ENCODE measurements at regions of chr17 and their contacts with region 1.

Region 1: GRCh38 chr17:16297367-16298139 is 55.7 kb downstream of the CENPV start:
- DNase-seq: no peak
- ATAC-seq: peak; percentile 44
- H3K4me3 ChIP-seq: no peak overlapping the region
- H3K27ac ChIP-seq: peak overlapping the region; percentile 34; the same call in 1 of the 2 replicates
- H3K4me1 ChIP-seq: peaks cover 14% of the 10 kb centered on the region
- H3K27me3 ChIP-seq: no peaks in the 10 kb centered on the region
- CTCF ChIP-seq: no peak

Region 2: DNA sequence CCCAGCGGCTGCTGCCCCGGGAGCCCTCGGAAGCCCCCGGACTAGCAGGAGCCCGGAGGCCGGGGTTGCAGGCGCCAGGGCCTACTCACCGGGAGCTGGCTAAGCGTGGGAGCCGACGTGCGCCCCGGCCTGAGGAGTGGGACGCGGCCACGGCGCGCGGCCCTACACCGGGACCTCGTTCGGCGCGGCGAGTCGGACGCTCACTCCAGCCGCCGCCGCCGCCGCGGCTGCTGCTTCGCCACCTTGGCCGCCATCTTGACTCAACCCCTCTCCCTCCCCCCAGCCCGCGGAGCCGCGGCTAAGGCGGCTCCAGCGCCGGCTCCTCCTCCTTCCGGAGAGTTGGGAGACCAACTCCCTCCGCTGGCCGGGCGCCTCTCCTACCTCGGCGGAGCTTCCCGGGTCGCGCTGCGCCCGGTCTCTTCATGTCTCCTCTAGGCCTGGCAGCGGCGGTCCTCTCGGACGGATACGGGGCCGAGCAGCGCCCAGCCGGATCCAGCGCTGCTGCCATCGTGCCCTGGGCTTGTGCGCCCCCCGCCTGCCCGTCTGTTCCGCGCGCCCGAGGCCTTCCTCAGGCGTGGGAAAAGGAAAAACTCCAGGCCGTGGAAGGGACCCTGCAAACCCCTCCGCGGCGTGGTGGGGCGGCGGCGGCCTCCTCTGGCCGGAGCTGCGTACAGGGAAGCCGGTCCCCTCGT is 82.1 kb before region 1 on chr17 and contains the start of gene NCOR1:
- CTCF ChIA-PET with region 1: no interaction called
- POLR2A ChIA-PET with region 1: no interaction called
- in situ Hi-C with region 1: no loop called
- intact Hi-C with region 1: loop called (anchors 10 kb)
- DNase-seq: peak; percentile 50
- ATAC-seq: peak; percentile 91
- H3K4me3 ChIP-seq: peak within 1 kb of the TSS; percentile 74 to 76
- H3K27ac ChIP-seq: peak within 1 kb of the TSS; percentile 83
- H3K4me1 ChIP-seq: peaks cover 12% of the 10 kb centered on the region; the same call in 1 of the 2 replicates
- H3K27me3 ChIP-seq: no peaks in the 10 kb centered on the region
- CTCF ChIP-seq: no peak
- total RNA-seq, gene NCOR1: 83.8 TPM

Region 3: DNA sequence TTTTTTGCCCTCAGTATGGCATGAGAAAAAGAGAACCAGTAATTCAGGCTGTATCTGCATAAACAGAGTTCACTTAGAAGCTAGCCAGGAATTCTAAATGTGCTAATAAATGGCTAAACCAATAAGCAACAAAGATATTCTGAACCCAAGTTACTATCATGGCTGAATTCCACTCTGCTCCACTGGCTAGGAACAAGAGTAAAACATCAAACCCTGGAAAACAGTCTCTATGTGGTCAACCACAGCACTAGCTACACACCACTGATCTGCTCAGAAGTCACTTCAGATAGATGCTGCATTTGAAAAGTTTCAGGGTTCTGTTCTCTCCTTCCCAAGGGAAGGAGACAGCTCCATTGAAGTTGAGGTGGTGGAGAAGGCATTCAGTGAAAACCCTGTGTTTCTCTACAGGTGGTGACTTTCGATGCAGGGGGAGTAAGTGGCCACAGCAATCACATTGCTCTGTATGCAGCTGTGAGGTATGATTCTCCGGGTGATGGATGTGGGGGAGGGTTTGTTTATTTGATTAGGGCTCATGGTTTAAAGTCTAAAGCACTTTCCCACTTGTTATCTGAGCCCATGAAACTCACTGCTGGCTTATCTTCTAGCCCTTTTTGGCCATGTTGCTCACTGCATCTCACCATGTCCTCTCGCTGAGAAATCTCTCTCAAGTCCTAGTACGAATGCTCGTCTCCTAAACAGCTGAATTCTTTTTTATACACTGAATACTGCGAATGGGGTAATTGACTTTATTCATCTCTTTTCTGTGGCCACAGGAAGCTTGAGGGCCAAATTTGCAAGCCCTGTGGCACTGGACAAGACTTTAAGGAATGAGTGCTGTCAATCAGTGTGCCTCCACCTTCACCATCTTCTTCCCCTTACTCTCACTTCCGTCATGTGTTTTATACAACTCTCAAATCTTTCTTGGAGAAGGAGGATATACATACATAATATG is 15.9 kb after region 1 on chr17:
- CTCF ChIA-PET with region 1: no interaction called
- POLR2A ChIA-PET with region 1: no interaction called
- in situ Hi-C with region 1: no loop called
- intact Hi-C with region 1: no loop called
- DNase-seq: no peak
- ATAC-seq: no peak
- H3K4me3 ChIP-seq: no peak overlapping the region
- H3K27ac ChIP-seq: no peak overlapping the region
- H3K4me1 ChIP-seq: no peaks in the 10 kb centered on the region
- H3K27me3 ChIP-seq: no peaks in the 10 kb centered on the region
- CTCF ChIP-seq: no peak

Region 4: GRCh38 chr17:16383772-16384287 is 86.3 kb after region 1 on chr17:
- CTCF ChIA-PET with region 1: no interaction called
- POLR2A ChIA-PET with region 1: no interaction called
- in situ Hi-C with region 1: no loop called
- intact Hi-C with region 1: no loop called
- DNase-seq: no peak
- ATAC-seq: no peak
- H3K4me3 ChIP-seq: no peak overlapping the region; a peak in 1 of 4 replicates
- H3K27ac ChIP-seq: peak overlapping the region; percentile 67
- H3K4me1 ChIP-seq: peaks cover 20% of the 10 kb centered on the region
- H3K27me3 ChIP-seq: no peaks in the 10 kb centered on the region
- CTCF ChIP-seq: no peak

Measured in Panc1 (cell line).